ENCODE measurements at regions of chr4 and their contacts with region 1.

Region 1: GRCh38 chr4:108072300-108072699 is 82.6 kb downstream of the HADH start:
- DNase-seq: peak; percentile 36 to 95 (median 76)
- ATAC-seq: peak; percentile 85 to 92 (median 86)
- H3K4me3 ChIP-seq: no peak overlapping the region
- H3K4me3 Mint-ChIP-seq: peak overlapping the region; percentile 31 to 58 (median 34)
- H3K27ac ChIP-seq: peak overlapping the region; percentile 76
- H3K27ac Mint-ChIP-seq: peak overlapping the region; percentile 82 to 91
- H3K4me1 ChIP-seq: peaks cover 37 to 52% of the 10 kb centered on the region in 2 experiments
- H3K4me1 Mint-ChIP-seq: peaks cover 77 to 86% (median 82%) of the 10 kb centered on the region in 3 donors
- H3K27me3 ChIP-seq: peaks cover 0 to 2% of the 10 kb centered on the region in 2 experiments
- H3K27me3 Mint-ChIP-seq: no peaks in the 10 kb centered on the region

Region 2: DNA sequence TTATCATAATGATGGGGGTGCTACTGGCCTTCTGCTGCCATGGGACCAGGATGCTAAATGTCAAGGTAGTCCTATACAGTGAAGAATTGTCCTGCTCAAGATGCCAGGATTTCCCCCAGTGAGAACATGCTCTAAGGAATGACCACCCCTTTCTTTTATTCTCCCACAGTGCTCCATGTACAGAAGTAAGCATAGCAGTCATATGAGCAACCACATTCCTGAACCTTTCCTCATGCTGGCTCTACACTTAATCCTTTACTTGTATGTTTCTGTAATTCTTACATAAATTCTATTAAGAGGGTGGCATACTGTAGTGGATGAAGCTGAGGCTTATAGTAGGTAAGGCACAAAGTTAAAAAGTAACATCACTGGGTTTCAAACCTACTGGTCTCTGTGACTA is 120.7 kb before region 1 on chr4:
- CTCF ChIA-PET with region 1: no interaction called
- POLR2A ChIA-PET with region 1: no interaction called
- DNase-seq: no peak
- ATAC-seq: no peak
- H3K4me3 ChIP-seq: no peak overlapping the region
- H3K4me3 Mint-ChIP-seq: no peak overlapping the region
- H3K27ac ChIP-seq: no peak overlapping the region
- H3K27ac Mint-ChIP-seq: no peak overlapping the region
- H3K4me1 ChIP-seq: no peaks in the 10 kb centered on the region
- H3K4me1 Mint-ChIP-seq: no peaks in the 10 kb centered on the region
- H3K27me3 ChIP-seq: no peaks in the 10 kb centered on the region
- H3K27me3 Mint-ChIP-seq: peaks cover 0 to 7% of the 10 kb centered on the region in 2 donors

Region 3: GRCh38 chr4:108155373-108155772 is 83.1 kb after region 1 on chr4:
- CTCF ChIA-PET with region 1: no interaction called
- POLR2A ChIA-PET with region 1: interaction called in 1 of 2 experiments, 11 read pairs
- DNase-seq: peak in 14 of 35 experiments; percentile 20 to 73 (median 41)
- ATAC-seq: peak; percentile 47 to 76 (median 52)
- H3K4me3 ChIP-seq: peak overlapping the region in 1 of 2 donors; percentile 10
- H3K4me3 Mint-ChIP-seq: peak overlapping the region; percentile 62 to 100 (median 99)
- H3K27ac ChIP-seq: peak overlapping the region; percentile 22
- H3K27ac Mint-ChIP-seq: peak overlapping the region; percentile 89 to 96
- H3K4me1 ChIP-seq: peaks cover 20 to 98% of the 10 kb centered on the region in 2 experiments
- H3K4me1 Mint-ChIP-seq: peaks cover 82 to 86% (median 83%) of the 10 kb centered on the region in 3 donors
- H3K27me3 ChIP-seq: no peaks in the 10 kb centered on the region
- H3K27me3 Mint-ChIP-seq: no peaks in the 10 kb centered on the region